ENCODE measurements at regions of chr9 and their contacts with region 1.

Region 1: GRCh38 chr9:35732122-35732799 is at the starts of genes CREB3 and TLN1:
- DNase-seq: peak; percentile 98 to 99
- H3K4me3 ChIP-seq: peak within 1 kb of the TSS; percentile 84 to 92
- H3K27ac ChIP-seq: peak within 1 kb of the TSS; percentile 89
- H3K4me1 ChIP-seq: peaks cover 55% of the 10 kb centered on the region
- H3K27me3 ChIP-seq: no peaks in the 10 kb centered on the region
- CTCF ChIP-seq: no peak
- POLR2A ChIP-seq: peak; percentile 26 to 57
- total RNA-seq, gene CREB3: 35.1 TPM
- total RNA-seq, gene TLN1: 268 TPM

Region 2: GRCh38 chr9:35603987-35604577 is 128.2 kb before region 1 on chr9:
- intact Hi-C with region 1: loop called (anchors 5 kb)
- DNase-seq: peak; percentile 100
- H3K4me3 ChIP-seq: peak overlapping the region; percentile 64 to 88
- H3K27ac ChIP-seq: peak overlapping the region; percentile 95
- H3K4me1 ChIP-seq: peaks cover 24% of the 10 kb centered on the region
- H3K27me3 ChIP-seq: no peaks in the 10 kb centered on the region
- CTCF ChIP-seq: peak; percentile 83 to 97 (median 86)
- POLR2A ChIP-seq: peak in 1 of 2 donors; percentile 62

Region 3: GRCh38 chr9:35646533-35647265 is 85.6 kb before region 1 on chr9:
- intact Hi-C with region 1: loop called (anchors 1 kb)
- DNase-seq: no peak
- H3K4me3 ChIP-seq: peak overlapping the region; percentile 48 to 60
- H3K27ac ChIP-seq: peak overlapping the region; percentile 93
- H3K4me1 ChIP-seq: peaks cover 26% of the 10 kb centered on the region
- H3K27me3 ChIP-seq: no peaks in the 10 kb centered on the region
- CTCF ChIP-seq: peak; percentile 89 to 97 (median 95)
- POLR2A ChIP-seq: peak in 1 of 2 donors; percentile 94

Region 4: DNA sequence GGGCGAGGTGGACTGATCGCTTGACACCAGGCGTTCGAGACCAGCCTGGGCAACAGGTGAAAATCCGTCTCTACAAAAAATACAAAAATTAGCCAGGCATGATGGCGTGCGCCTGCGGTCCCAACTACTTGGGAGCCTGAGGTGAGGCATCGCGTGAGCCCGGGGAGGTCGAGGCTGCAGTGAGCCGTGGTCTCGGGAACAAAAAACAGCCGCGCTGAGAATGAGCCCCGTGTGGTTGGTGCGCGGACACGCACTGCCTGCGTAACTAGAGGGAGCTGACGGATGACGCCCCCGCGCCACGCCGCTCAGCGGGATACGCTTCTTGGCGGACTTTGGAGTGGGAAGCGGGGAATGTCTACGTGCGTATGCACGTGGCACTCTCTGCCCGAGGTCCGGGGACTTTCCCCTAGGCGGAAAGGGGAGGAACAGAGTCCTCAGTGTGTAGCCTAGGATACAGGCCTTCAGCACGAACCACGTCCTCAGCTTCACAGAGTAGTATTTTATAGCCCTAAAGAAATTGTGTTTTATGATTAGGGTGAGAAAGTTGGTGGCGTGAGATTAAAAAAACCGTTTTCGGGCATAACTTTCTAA is 74.6 kb before region 1 on chr9 and contains the start of gene RMRP:
- intact Hi-C with region 1: loop called (anchors 2 kb)
- DNase-seq: peak in 1 of 2 donors; percentile 99
- H3K4me3 ChIP-seq: peak within 1 kb of the TSS; percentile 84 to 97
- H3K27ac ChIP-seq: peak within 1 kb of the TSS; percentile 96
- H3K4me1 ChIP-seq: peaks cover 18% of the 10 kb centered on the region
- H3K27me3 ChIP-seq: no peaks in the 10 kb centered on the region
- CTCF ChIP-seq: peak in 2 of 3 experiments; percentile 3 to 43
- POLR2A ChIP-seq: peak in 1 of 2 donors; percentile 59
- total RNA-seq, gene RMRP: 8,462 TPM

Region 5: DNA sequence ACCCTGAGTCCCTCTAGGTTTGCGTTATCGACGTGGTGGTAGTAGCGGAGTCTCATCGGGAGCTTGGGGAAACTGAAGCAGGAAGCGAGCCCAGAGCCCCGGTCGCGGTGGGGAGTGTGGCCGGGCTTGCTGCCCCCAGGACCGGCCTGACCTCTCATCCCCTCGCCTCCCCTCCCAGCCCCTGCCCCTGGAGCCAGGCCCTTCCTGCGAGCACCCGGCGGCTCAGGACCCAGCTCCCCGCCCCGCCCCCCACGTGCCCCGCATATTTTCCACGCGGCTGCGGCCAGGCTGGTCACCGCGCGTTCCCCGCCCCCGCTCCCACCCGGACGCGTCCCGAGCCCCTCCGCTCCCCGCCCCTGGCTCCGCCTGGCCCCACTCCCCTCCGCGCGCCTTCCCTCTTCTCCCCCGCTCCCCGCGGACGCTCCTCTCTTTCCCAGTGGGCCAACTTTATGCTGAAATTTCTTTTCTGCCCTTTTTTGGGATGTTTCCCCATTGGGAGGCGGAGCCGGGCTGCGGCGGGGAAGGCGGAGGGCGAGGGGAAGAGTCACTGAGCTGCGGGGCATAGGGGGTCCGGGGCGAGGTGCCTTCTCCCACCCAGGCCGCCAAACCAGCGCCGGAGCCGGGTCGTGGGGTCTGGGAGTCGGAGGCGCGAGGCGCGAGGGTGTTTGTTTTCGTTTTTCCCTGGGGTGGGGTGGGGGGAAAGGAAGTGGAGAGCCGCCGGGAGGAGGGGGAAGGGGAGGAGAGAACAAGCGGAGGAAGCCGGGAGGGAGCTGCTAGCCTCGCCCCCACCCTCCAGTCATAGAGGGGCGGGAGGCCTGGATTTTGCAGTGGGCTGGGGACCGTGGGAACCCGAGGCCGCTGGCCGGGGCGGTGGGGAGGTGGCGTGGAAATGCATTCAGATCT is 41.6 kb before region 1 on chr9:
- intact Hi-C with region 1: loop called (anchors 5 kb)
- DNase-seq: no peak
- H3K4me3 ChIP-seq: peak overlapping the region; percentile 79 to 90
- H3K27ac ChIP-seq: peak overlapping the region; percentile 96
- H3K4me1 ChIP-seq: peaks cover 32% of the 10 kb centered on the region
- H3K27me3 ChIP-seq: no peaks in the 10 kb centered on the region
- CTCF ChIP-seq: no peak
- POLR2A ChIP-seq: peak in 1 of 2 donors; percentile 64

Measured in vagina (tissue), 2 donors.